Vagina (tissue), 2 donors: ENCODE measurements at regions of chr19 and their contacts with region 1.

Region 1: GRCh38 chr19:58279925-58280316 is 1.2 kb downstream of the ZNF8 start:
- DNase-seq: no peak
- H3K4me3 ChIP-seq: peak overlapping the region; percentile 69 to 100
- H3K27ac ChIP-seq: no peak overlapping the region
- H3K4me1 ChIP-seq: peaks cover 30% of the 10 kb centered on the region
- H3K27me3 ChIP-seq: no peaks in the 10 kb centered on the region
- CTCF ChIP-seq: no peak
- POLR2A ChIP-seq: no peak

Region 2: GRCh38 chr19:58307736-58308135 is 27.8 kb after region 1 on chr19:
- intact Hi-C with region 1: loop called (anchors 1 kb)
- DNase-seq: no peak
- H3K4me3 ChIP-seq: no peak overlapping the region
- H3K27ac ChIP-seq: no peak overlapping the region
- H3K4me1 ChIP-seq: peaks cover 15% of the 10 kb centered on the region
- H3K27me3 ChIP-seq: no peaks in the 10 kb centered on the region
- CTCF ChIP-seq: no peak
- POLR2A ChIP-seq: no peak